Head of caudate nucleus (tissue), 42 donors: ENCODE measurements at regions of chr20 and their contacts with region 1.

Region 1: GRCh38 chr20:32652739-32653526 is 20.8 kb downstream of the C20orf203 start:
- DNase-seq: peak; percentile 76 to 95 (median 89)

Region 2: GRCh38 chr20:32521780-32522525 is 131.0 kb before region 1 on chr20:
- intact Hi-C with region 1: loop called (anchors 1 kb)
- DNase-seq: peak; percentile 65 to 91 (median 80)

Region 3: GRCh38 chr20:32681175-32682084 is 28.5 kb after region 1 on chr20:
- intact Hi-C with region 1: no loop called
- DNase-seq: peak in 11 of 42 donors; percentile 11 to 51 (median 24)

Region 4: DNA sequence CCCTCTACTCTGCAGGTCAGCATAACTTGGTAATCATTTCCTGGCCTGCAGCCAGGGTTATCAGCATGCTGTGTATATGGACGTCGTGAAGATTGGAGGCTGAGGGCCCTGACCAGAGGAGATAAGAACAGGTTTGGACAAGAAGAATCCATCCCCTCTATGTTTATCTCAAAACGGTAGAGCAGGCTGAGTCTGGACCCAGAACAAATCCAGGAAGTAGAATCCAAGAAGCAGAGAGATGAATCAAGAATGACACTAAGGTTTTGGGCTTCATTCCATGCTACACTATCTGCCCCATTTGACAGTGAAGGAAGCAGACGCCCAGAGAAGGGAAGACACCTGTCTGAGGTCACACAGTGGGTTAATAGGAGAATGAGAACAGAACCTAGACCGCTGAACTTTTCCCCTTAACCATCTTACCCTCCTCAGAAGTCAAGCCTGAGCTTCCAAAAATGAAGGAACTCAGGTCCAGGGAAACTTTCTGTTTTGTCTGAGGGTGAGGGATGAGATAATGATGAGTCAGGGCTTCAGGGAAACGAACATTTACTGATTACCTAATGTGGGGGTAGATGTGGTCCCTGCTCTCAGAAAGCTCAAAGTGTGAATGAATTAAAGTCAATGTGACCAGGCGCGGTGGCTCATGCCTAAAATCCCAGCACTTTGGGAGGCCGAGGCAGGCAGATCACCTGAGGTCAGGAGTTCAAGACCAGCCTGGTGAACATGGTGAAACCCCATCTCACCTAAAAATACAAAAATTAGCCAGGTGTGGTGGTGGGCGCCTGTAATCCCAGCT is 99.7 kb after region 1 on chr20:
- intact Hi-C with region 1: no loop called
- DNase-seq: no peak